ENCODE measurements at regions of chr16 and their contacts with region 1.

Region 1: GRCh38 chr16:2205104-2205966 is at the start of gene MLST8:
- DNase-seq: peak; percentile 86
- H3K4me3 Mint-ChIP-seq: peak within 1 kb of the TSS; percentile 78
- H3K27ac Mint-ChIP-seq: peak within 1 kb of the TSS; percentile 85
- H3K4me1 Mint-ChIP-seq: peaks cover 22% of the 10 kb centered on the region
- H3K27me3 Mint-ChIP-seq: no peaks in the 10 kb centered on the region
- total RNA-seq, gene MLST8: 70.0 to 70.1 TPM

Region 2: GRCh38 chr16:2223375-2224182 is 18.2 kb after region 1 on chr16 and contains the start of gene E4F1:
- CTCF ChIA-PET with region 1: no interaction called
- intact Hi-C with region 1: loop called (anchors 1 kb)
- DNase-seq: peak; percentile 100
- H3K4me3 Mint-ChIP-seq: peak within 1 kb of the TSS; percentile 78
- H3K27ac Mint-ChIP-seq: peak within 1 kb of the TSS; percentile 18
- H3K4me1 Mint-ChIP-seq: peaks cover 22% of the 10 kb centered on the region
- H3K27me3 Mint-ChIP-seq: no peaks in the 10 kb centered on the region
- total RNA-seq, gene E4F1: 21.2 to 21.7 TPM

Measured in activated naive CD4-positive, alpha-beta T cell treated with anti-CD3 and anti-CD28 coated beads for 36 hours (primary cell).